ENCODE measurements at regions of chr16 and their contacts with region 1.

Region 1: DNA sequence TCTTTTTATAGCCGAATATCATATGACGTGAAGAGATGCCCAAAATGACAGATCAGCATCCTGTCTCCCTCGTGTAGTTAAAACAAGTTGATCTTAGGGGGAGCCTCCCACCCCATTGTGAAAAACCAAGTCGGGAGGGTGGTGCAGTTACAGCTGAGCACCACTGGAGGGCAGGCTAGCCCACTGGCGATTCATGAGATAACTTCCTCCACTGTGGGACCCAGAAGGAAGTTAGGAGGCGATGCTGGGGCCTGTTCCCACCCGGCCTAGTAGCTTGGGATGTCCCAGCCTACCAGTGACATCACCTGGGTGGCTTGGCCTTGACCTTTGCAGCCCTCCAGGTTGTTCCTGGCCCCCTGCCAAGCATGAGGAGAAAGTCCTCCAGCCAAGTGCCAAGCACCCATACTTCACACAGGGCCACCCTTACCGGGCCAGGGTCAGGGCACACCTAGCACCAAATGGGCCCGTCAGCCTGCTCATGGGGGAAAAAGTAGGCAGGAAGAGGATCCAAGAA is 8.1 kb upstream of the CPNE2 start:
- DNase-seq: peak; percentile 84
- ATAC-seq: peak; percentile 81
- H3K4me3 Mint-ChIP-seq: no peak overlapping the region
- H3K27ac Mint-ChIP-seq: peak overlapping the region; percentile 76
- H3K4me1 Mint-ChIP-seq: peaks cover 7% of the 10 kb centered on the region
- H3K27me3 Mint-ChIP-seq: peaks cover 6% of the 10 kb centered on the region

Region 2: DNA sequence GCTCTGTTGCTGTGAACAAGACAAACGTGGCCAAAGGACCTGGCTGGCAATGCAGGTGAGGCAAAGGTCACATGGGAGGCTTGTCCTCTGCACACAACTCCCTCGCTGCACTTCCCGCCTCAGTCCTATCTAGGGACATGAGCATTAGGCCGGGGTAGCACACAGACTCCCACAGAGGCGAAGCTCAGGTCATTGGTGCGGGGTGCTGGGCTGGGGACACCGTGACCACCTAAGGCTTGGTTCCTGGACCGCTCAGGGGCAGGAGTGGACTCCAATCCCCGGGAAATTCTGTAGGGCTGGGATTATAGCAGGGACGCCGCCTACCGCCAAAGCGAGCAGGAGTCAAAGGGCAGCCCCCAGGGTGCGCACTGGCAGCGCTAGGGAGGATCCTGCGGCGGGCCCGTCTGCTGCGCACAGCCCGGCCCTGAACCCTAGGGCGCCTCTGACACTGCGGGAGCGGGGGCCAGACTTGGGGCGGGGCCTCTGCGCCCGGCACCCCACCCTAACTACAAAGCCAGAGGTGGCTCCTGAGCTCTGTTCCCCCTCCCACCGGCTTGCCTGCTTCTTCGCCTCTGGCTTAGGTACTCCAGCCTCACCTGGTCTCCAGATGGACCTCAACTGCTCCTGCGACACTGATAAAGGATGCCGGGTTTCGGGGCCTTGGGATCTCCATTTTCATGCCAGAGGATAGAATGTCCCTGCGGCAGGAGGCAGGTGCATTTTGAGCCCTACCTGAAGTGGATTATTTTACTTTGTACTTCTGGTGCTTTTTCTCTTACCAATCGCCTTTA is 436.5 kb before region 1 on chr16:
- CTCF ChIA-PET with region 1: no interaction called
- DNase-seq: no peak
- ATAC-seq: no peak
- H3K4me3 Mint-ChIP-seq: no peak overlapping the region
- H3K27ac Mint-ChIP-seq: no peak overlapping the region
- H3K4me1 Mint-ChIP-seq: peaks cover 11% of the 10 kb centered on the region
- H3K27me3 Mint-ChIP-seq: peaks cover 53% of the 10 kb centered on the region

Region 3: DNA sequence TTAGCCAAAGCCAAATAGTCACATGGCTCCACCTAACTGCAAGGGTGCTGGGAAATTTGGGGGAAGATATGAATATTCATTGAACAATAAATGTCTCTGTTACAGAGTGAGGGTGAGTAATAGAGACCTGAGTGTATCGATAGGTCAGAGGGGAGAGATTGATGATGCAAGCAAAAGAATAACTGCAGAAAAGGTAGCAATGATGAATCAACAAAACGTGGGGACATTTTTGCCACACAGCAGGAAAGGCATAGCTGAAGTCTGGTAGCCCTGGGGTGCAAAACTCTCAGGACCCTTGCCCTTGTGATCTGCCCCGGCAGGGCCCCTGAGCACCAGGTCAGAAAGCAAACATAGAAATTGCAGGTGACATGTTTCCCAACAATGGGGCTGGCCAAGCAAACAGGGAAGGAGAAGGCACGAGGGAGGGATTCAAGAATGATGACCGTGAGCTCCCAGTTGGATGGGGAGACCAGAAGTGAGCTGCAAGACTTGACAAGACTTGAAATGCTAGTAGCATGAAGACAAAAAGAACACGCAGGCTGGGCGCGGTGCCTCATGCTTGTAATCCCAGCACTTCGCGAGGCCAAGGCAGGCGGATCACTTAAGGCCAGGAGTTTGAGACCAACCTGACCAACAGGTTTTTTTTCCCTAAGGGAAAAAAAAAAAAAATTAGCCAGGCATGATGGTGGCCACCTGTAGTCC is 165.1 kb before region 1 on chr16:
- CTCF ChIA-PET with region 1: no interaction called
- DNase-seq: no peak
- ATAC-seq: no peak
- H3K4me3 Mint-ChIP-seq: no peak overlapping the region
- H3K27ac Mint-ChIP-seq: no peak overlapping the region
- H3K4me1 Mint-ChIP-seq: peaks cover 25% of the 10 kb centered on the region
- H3K27me3 Mint-ChIP-seq: peaks cover 10% of the 10 kb centered on the region

Region 4: DNA sequence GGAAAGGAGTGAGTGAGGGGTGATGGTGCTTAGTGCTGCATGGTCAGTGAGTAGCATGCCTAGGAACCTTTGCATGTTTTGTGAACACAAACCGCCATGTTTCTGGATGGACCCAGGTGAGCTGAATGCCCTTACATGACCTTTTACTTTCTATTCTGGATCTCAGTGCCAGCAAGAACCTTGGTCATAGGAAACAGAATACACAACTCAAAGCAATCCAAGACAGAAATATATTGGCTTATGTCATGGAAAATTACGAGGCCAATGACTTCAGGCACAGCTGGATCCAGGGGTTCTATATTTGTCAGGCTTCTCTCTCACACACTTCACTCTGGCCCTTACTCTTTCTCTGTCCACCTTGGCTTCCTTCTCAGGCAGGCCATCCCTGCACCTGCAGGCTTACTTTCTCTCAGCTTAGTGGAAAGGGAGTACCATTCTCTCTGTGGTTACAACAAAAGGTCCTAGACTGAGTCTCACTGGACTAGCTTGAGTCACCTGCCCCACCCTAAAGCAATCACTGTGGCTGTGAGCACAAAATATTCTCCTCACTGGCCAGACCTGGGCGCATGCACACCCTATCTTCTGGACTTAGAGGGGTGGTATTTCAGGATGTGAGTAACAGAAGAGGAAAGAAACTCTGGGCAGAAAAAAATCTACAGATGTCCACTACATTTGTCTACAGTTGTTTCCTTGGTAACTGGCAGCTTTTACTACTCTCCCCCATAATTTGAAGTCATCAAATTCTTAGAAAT is 12.3 kb before region 1 on chr16:
- CTCF ChIA-PET with region 1: interaction called, 16 read pairs
- DNase-seq: no peak
- ATAC-seq: peak; percentile 50
- H3K4me3 Mint-ChIP-seq: no peak overlapping the region
- H3K27ac Mint-ChIP-seq: peak overlapping the region; percentile 52
- H3K4me1 Mint-ChIP-seq: peaks cover 29% of the 10 kb centered on the region
- H3K27me3 Mint-ChIP-seq: no peaks in the 10 kb centered on the region

Region 5: DNA sequence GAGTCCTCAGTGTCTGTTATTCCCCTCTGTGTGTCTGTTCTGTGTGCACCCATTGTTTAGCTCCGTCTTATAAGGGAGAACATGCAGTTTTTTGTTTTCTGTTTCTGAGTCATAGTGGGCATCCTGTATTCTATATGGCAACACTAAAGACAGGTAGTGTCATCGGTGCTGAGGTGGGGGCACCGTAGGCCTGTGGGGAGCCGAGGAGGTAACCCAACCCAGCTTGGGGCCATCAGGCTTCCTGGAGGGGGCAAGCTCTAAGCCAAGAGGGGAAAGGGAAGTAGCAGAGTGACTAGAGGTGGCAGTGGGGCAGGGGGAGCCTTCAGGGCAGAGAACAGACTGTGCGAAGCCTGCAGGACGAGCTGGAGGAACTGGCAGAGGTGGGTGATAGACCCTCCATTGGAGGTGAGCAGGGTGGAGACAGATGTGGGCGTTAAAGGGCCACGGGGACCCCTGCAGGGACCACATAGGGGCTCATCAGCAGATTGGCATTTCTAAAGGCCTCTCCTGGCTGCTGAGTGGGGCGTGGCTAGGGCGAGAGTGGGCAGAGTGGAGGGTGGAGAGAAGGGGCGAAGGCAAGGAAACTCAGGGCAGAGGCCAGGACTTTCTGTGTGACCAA is 44.6 kb after region 1 on chr16:
- CTCF ChIA-PET with region 1: interaction called, 14 read pairs
- DNase-seq: peak; percentile 86
- ATAC-seq: peak; percentile 81
- H3K4me3 Mint-ChIP-seq: peak overlapping the region; percentile 74
- H3K27ac Mint-ChIP-seq: peak overlapping the region; percentile 95
- H3K4me1 Mint-ChIP-seq: peaks cover 82% of the 10 kb centered on the region
- H3K27me3 Mint-ChIP-seq: no peaks in the 10 kb centered on the region

Region 6: DNA sequence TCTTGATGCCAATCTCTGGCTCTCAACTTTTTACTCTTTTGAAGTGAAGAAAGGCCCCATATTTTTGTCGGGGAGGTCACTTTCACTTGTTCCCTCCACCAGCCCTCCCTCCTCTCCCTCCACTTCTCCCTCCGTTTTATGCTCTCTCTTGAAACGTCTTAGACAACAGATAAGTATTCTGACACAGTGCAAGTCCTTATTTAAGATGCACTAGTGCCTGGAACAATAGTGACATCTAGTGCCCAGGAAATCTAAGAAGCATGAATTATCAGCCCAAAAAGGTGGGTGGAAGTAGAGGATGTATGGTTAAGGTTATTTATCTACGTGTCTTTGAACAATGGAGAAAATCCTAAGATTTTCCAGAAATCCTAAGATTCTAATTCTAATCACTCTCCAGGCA is 83.6 kb after region 1 on chr16:
- CTCF ChIA-PET with region 1: interaction called, 15 read pairs
- DNase-seq: no peak
- ATAC-seq: peak; percentile 78
- H3K4me3 Mint-ChIP-seq: no peak overlapping the region
- H3K27ac Mint-ChIP-seq: no peak overlapping the region
- H3K4me1 Mint-ChIP-seq: peaks cover 4% of the 10 kb centered on the region
- H3K27me3 Mint-ChIP-seq: no peaks in the 10 kb centered on the region

Region 7: GRCh38 chr16:57416122-57416509 is 331.8 kb after region 1 on chr16:
- CTCF ChIA-PET with region 1: interaction called, 22 read pairs
- DNase-seq: no peak
- ATAC-seq: no peak
- H3K4me3 Mint-ChIP-seq: no peak overlapping the region
- H3K27ac Mint-ChIP-seq: no peak overlapping the region
- H3K4me1 Mint-ChIP-seq: peaks cover 19% of the 10 kb centered on the region
- H3K27me3 Mint-ChIP-seq: no peaks in the 10 kb centered on the region

Measured in activated CD8-positive, alpha-beta memory T cell treated with anti-CD3 and anti-CD28 coated beads, Interleukin-2, amount 10 ng/mL, durations not matched to agents 7 days and 5 days (primary cell).